ENCODE measurements at regions of chr2 and their contacts with region 1.

Region 1: DNA sequence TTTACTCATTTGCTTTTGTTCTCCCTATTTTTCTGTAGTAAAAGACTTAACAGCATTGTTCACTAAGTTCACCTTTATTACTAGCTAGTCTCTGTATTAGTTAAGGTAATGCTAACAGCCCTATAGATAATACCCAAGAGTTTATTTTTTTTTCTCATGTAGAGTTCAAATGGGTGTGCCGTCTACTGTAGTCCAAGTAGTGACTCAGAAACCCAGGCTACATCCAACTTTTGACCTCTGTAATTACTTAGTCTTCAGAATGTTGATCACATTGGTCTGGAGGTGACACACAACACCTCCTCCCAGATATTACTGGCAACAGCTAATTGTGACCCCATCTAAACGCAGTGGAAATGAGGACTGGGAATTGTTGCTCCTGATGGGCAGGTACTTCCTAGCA is 7.7 kb downstream of the COQ10B start:
- DNase-seq: no peak
- ATAC-seq: no peak

Region 2: DNA sequence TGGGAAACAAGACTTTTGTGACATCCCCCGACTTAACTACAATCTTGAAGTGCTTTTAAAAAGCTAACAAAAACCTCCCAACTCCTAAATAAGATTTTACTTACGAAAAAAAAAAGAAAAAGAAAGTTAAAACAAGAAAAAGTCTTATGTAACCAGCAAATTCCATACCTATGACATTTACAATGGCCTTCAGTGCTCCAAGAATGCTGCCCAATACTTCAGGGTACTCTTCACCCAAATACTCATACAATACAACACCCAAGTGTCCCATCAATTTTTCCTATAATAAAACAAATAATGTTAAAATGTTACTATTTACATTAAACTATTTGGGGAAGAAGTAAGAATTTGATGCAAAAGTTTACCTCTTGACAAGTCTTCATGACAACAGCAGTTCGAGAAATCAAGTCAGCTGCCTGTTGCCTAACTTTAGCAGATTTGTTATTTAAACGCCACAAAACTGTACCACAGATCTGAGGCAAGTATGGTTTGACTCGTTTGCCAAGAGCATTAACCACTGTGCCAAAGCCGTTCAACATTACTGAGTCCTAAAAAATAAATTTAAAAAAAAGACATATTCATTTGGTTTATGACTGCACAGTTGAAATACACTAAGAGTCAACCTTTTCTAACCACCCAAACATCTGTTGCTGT is 61.0 kb before region 1 on chr2:
- intact Hi-C with region 1: loop called (anchors 5 kb)
- DNase-seq: no peak
- ATAC-seq: no peak

Region 3: DNA sequence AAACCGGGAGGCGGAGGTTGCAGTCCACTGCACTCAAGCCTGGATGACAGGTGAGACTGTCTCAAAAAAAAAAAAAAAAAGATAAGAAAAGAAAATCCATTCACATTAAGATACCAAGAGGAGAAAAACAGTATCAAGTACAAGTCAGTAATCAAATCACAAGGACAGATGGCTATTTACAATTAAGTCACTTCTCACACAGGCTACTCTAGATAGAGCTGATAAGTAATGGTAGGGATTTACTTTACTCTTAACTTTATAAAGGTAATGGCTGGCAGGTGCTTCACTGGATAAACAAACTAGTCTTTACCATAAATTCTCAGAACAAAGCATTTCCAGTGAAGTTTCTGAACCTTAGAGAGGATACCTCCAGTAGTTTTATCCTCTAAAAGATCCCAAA is 37.8 kb before region 1 on chr2:
- intact Hi-C with region 1: loop called (anchors 5 kb)
- DNase-seq: no peak
- ATAC-seq: no peak

Region 4: DNA sequence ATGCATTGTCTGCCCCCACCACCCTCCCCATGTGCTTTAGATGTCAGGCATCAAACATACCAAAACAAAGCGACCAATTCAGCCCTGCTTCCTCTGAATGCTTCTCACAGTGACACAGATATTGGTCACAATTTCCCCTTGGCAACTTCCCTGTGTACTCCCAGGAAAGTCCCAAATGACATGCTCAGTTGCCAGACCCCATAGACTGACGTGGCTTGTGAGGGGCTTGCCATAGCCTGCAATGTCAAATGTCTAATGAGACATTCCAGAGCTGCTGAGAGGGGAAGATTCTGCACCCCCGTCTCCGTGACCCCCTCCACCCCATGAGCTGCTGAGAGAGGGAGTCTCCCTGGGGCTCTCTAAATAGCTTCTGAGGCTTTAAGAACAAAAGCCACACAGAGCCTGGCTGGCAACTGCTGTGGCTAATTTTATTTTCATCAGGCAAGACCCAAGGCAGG is 167.0 kb after region 1 on chr2:
- intact Hi-C with region 1: no loop called
- DNase-seq: no peak
- ATAC-seq: peak; percentile 48

Region 5: GRCh38 chr2:198283146-198283545 is 822.1 kb after region 1 on chr2:
- intact Hi-C with region 1: no loop called
- DNase-seq: no peak
- ATAC-seq: no peak